H1 (cell line): ENCODE measurements at regions of chr3 and their contacts with region 1.

Region 1: GRCh38 chr3:25441234-25441856 is 13.3 kb downstream of the RARB start:
- DNase-seq: peak in 1 of 2 experiments; percentile 83
- H3K4me3 ChIP-seq: no peak overlapping the region
- H3K27ac ChIP-seq: no peak overlapping the region
- H3K4me1 ChIP-seq: peaks cover 0 to 5% (median 0%) of the 10 kb centered on the region in 4 experiments; a peak in 2 of 7 replicates
- H3K27me3 ChIP-seq: no peaks in the 10 kb centered on the region
- CTCF ChIP-seq: peak; percentile 44 to 83 (median 80)
- EP300 ChIP-seq: no peak
- POLR2A ChIP-seq: no peak
- RAD21 ChIP-seq: peak; percentile 27 to 51; a peak in 3 of 4 replicates

Region 2: DNA sequence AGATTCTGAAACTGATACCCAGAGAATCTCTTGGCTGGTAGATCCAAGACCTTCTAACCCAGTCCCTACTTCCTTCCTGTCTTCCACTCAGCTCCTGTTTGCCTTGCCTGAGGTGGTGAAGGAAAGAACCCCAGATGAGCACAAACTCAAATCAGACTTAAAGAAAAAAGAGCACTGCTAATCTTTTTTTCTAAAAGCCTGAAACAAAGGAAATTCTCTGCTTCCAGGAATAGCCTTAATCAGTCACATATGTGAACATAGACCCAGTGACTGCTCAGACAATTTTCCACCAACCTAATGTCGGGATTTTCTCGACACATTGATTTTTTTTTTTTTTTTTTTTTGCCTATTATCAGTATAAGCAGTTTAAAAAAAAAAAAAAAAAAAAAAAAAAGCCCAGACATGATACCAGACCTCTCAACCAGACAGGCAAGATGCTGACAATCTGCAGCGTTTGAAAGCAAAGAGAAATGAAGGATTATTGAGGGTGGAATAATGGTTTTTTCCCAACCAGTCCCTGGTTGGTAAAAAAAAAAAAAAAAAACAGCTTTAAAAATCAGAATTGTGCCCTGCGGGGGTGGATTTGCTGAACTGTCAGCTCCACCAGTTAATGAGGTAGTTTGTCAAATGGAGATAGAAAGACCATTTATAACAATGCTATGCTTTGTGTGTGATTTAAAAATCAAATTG is 270.1 kb before region 1 on chr3:
- CTCF ChIA-PET with region 1: no interaction called
- POLR2A ChIA-PET with region 1: no interaction called
- DNase-seq: no peak
- H3K4me3 ChIP-seq: no peak overlapping the region
- H3K27ac ChIP-seq: no peak overlapping the region
- H3K4me1 ChIP-seq: peaks cover 0 to 16% (median 5%) of the 10 kb centered on the region in 4 experiments; a peak in 3 of 7 replicates
- H3K27me3 ChIP-seq: no peaks in the 10 kb centered on the region
- CTCF ChIP-seq: no peak
- EP300 ChIP-seq: no peak
- POLR2A ChIP-seq: no peak
- RAD21 ChIP-seq: no peak

Region 3: GRCh38 chr3:25400587-25400986 is 40.8 kb before region 1 on chr3:
- CTCF ChIA-PET with region 1: no interaction called
- POLR2A ChIA-PET with region 1: no interaction called
- DNase-seq: no peak
- H3K4me3 ChIP-seq: no peak overlapping the region
- H3K27ac ChIP-seq: no peak overlapping the region
- H3K4me1 ChIP-seq: 0 out of 7 replicates have a peak, but pooled peaks cover 0 to 3% (median 0%) of the 10 kb centered on the region in 4 experiments
- H3K27me3 ChIP-seq: no peaks in the 10 kb centered on the region
- CTCF ChIP-seq: no peak
- EP300 ChIP-seq: no peak
- POLR2A ChIP-seq: no peak
- RAD21 ChIP-seq: no peak

Region 4: DNA sequence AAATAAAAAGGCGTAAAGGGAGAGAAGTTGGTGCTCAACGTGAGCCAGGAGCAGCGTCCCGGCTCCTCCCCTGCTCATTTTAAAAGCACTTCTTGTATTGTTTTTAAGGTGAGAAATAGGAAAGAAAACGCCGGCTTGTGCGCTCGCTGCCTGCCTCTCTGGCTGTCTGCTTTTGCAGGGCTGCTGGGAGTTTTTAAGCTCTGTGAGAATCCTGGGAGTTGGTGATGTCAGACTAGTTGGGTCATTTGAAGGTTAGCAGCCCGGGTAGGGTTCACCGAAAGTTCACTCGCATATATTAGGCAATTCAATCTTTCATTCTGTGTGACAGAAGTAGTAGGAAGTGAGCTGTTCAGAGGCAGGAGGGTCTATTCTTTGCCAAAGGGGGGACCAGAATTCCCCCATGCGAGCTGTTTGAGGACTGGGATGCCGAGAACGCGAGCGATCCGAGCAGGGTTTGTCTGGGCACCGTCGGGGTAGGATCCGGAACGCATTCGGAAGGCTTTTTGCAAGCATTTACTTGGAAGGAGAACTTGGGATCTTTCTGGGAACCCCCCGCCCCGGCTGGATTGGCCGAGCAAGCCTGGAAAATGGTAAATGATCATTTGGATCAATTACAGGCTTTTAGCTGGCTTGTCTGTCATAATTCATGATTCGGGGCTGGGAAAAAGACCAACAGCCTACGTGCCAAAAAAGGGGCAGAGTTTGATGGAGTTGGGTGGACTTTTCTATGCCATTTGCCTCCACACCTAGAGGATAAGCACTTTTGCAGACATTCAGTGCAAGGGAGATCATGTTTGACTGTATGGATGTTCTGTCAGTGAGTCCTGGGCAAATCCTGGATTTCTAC is 13.2 kb before region 1 on chr3 and contains the start of gene RARB:
- CTCF ChIA-PET with region 1: interaction called, 27 read pairs
- POLR2A ChIA-PET with region 1: interaction called, 4 read pairs
- DNase-seq: peak; percentile 39 to 62
- H3K4me3 ChIP-seq: peak within 1 kb of the TSS; percentile 20 to 62 (median 31)
- H3K27ac ChIP-seq: no peak within 1 kb of the TSS
- H3K4me1 ChIP-seq: peaks cover 6 to 18% (median 14%) of the 10 kb centered on the region in 4 experiments; a peak in 6 of 7 replicates
- H3K27me3 ChIP-seq: peaks cover 0 to 10% (median 7%) of the 10 kb centered on the region in 4 experiments; a peak in 5 of 7 replicates
- CTCF ChIP-seq: no peak
- EP300 ChIP-seq: peak in 1 of 2 experiments; percentile 89; a peak in 2 of 3 replicates
- POLR2A ChIP-seq: 0 out of 3 replicates have a peak, but pooled peaks of 1 of the 2 experiments have one; percentile 17
- RAD21 ChIP-seq: no peak
- total RNA-seq, gene RARB: 0.22 and 0.44 TPM in 2 replicates

Region 5: GRCh38 chr3:25455441-25456132 is 14.2 kb after region 1 on chr3:
- CTCF ChIA-PET with region 1: interaction called, 25 read pairs
- POLR2A ChIA-PET with region 1: interaction called, 3 read pairs
- DNase-seq: no peak
- H3K4me3 ChIP-seq: no peak overlapping the region; a peak in 1 of 8 replicates
- H3K27ac ChIP-seq: no peak overlapping the region
- H3K4me1 ChIP-seq: peaks cover 0 to 19% (median 11%) of the 10 kb centered on the region in 4 experiments; a peak in 5 of 7 replicates
- H3K27me3 ChIP-seq: no peaks in the 10 kb centered on the region
- CTCF ChIP-seq: no peak
- EP300 ChIP-seq: no peak
- POLR2A ChIP-seq: no peak
- RAD21 ChIP-seq: no peak

Region 6: GRCh38 chr3:25468866-25469319 is 27.5 kb after region 1 on chr3:
- CTCF ChIA-PET with region 1: interaction called, 10 read pairs
- POLR2A ChIA-PET with region 1: no interaction called
- DNase-seq: no peak
- H3K4me3 ChIP-seq: no peak overlapping the region
- H3K27ac ChIP-seq: no peak overlapping the region
- H3K4me1 ChIP-seq: no peaks in the 10 kb centered on the region
- H3K27me3 ChIP-seq: no peaks in the 10 kb centered on the region
- CTCF ChIP-seq: peak in 2 of 3 experiments; percentile 38 to 42; a peak in 2 of 4 replicates
- EP300 ChIP-seq: no peak
- POLR2A ChIP-seq: no peak
- RAD21 ChIP-seq: peak; percentile 19 to 28; a peak in 2 of 4 replicates

Region 7: DNA sequence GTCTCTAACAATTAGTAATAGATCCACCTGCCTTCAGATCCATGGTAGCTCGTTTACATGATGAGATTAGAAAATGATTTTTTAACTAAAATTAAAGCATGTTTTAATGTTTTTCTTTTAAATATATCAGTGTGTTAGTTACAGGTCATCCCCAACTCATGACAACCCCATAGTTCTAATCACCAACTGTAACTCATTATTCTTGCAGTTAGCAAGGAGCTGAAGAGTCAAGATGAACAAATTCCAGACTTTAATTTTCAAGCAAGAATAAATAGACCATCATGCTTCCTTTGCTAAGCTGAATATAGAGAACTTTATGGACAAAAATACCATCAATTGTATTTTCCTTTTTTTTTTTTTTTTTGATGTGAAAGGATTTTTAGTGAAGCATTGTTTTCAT is 122.3 kb after region 1 on chr3:
- CTCF ChIA-PET with region 1: no interaction called
- POLR2A ChIA-PET with region 1: no interaction called
- DNase-seq: no peak
- H3K4me3 ChIP-seq: no peak overlapping the region
- H3K27ac ChIP-seq: no peak overlapping the region
- H3K4me1 ChIP-seq: no peaks in the 10 kb centered on the region
- H3K27me3 ChIP-seq: no peaks in the 10 kb centered on the region
- CTCF ChIP-seq: no peak
- EP300 ChIP-seq: no peak
- POLR2A ChIP-seq: no peak
- RAD21 ChIP-seq: no peak